ENCODE measurements at regions of chr17 and their contacts with region 1.

Region 1: DNA sequence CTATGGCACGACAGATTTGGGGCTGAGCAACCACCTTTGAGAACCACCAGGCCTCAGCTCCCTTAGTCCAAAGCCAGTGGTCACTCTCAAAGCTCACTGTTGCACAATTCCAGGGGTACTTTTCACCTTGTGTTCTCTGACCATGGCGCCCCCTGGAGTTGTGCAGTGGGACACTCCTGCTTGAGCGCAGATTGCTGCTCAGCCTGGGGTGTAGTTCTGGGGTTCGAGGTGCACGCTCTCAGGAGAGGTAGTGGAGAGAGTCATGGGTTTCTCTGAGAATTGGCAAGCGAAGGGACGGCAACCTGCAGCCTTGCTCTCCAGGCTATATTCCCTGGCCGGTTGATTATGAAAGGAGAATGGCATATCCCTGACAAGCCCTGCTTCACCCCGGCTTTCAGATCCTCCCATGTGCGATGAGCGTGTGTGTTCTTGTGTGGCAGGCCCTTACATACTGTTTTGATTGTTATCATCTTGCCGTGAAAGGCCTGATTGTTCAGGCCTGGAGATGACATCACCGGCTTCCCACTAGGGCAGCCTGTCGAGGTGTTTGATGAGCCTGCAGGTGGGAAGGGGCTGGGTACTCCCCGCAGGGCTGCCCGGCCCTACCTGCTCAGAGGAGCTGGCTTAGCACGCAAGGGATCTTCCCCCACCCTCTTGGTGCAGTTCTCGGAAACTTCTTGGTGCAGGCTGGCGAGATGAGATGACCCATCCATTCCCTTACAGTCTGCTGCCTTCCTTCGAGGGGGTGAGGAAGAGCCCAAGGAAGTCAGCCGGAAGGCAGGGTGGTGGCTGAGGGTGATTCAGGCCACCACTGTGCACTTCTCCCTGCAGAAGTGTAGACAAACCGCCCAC is 431.2 kb downstream of the SLC39A11 start:
- DNase-seq: no peak
- ATAC-seq: no peak
- H3K4me3 ChIP-seq: no peak overlapping the region
- H3K27ac ChIP-seq: peak overlapping the region; percentile 64
- H3K4me1 ChIP-seq: peaks cover 37% of the 10 kb centered on the region
- H3K27me3 ChIP-seq: no peaks in the 10 kb centered on the region
- CTCF ChIP-seq: peak; percentile 69; the same call in 1 of the 2 replicates

Region 2: GRCh38 chr17:72515291-72516065 is 145.8 kb before region 1 on chr17:
- CTCF ChIA-PET with region 1: no interaction called
- POLR2A ChIA-PET with region 1: no interaction called
- in situ Hi-C with region 1: no loop called
- intact Hi-C with region 1: no loop called
- DNase-seq: no peak
- ATAC-seq: peak; percentile 3; the same call in 1 of the 2 replicates
- H3K4me3 ChIP-seq: peak overlapping the region; percentile 1 to 53; a peak in 3 of 4 replicates
- H3K27ac ChIP-seq: peak overlapping the region; percentile 90
- H3K4me1 ChIP-seq: peaks cover 91% of the 10 kb centered on the region
- H3K27me3 ChIP-seq: no peaks in the 10 kb centered on the region
- CTCF ChIP-seq: no peak

Region 3: GRCh38 chr17:72640415-72641165 is 20.7 kb before region 1 on chr17:
- CTCF ChIA-PET with region 1: no interaction called
- POLR2A ChIA-PET with region 1: no interaction called
- in situ Hi-C with region 1: no loop called
- intact Hi-C with region 1: no loop called
- DNase-seq: no peak
- ATAC-seq: peak; percentile 68
- H3K4me3 ChIP-seq: peak overlapping the region; percentile 9 to 45; a peak in 3 of 4 replicates
- H3K27ac ChIP-seq: 0 out of 2 replicates have a peak overlapping the region, but pooled peaks have one; percentile 27
- H3K4me1 ChIP-seq: peaks cover 7% of the 10 kb centered on the region
- H3K27me3 ChIP-seq: no peaks in the 10 kb centered on the region
- CTCF ChIP-seq: no peak

Region 4: DNA sequence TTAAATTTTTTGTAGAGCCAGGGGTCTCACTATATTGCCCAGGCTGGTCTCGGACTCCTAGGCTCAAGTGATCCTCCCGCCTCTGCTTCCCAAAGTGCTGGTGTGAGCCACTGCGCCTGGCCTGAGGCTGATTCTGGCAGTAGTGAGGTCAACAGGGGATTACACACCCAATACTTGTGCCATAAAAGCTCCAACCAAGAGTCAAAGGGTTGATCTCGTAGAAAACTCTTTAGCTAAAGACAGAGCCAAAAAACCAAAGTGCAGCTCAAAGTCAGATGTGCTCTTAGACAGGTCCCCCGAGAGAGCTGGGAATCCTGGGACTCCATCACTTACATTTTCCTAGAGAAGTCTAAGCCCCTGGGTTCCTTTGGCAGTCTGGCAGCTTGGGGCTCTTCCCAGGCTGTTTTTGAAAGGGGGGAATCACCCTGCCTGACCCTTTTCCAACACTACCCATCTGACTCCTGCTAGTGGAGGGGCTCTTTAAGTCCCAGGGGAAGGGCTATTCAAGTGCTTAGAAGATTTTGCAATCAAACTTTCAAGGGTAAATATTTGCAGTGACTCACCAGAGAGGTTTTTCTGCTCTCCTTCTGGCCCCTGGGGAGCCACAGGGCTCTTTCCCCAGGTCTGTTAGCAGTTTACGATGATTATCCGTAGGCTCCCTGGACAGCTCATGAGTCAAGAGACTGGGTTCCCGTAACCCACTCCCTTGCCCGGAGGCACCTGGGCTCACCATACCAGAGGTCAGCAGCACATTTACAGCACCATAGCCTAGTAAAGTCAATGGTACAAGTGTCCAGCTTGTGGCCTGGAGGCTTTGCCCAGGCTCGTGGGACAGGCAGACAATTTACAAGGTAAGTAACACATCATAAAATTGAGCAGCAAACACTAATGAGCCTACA is 22.4 kb after region 1 on chr17:
- CTCF ChIA-PET with region 1: no interaction called
- POLR2A ChIA-PET with region 1: interaction called, 14 read pairs
- in situ Hi-C with region 1: no loop called
- intact Hi-C with region 1: loop called (anchors 2 kb)
- DNase-seq: peak; percentile 86
- ATAC-seq: peak; percentile 96
- H3K4me3 ChIP-seq: peak overlapping the region; percentile 5 to 20; a peak in 2 of 4 replicates
- H3K27ac ChIP-seq: peak overlapping the region; percentile 100
- H3K4me1 ChIP-seq: peaks cover 66% of the 10 kb centered on the region
- H3K27me3 ChIP-seq: no peaks in the 10 kb centered on the region
- CTCF ChIP-seq: no peak